Mammary epithelial cell (primary cell): ENCODE measurements at regions of chr16 and their contacts with region 1.

Region 1: DNA sequence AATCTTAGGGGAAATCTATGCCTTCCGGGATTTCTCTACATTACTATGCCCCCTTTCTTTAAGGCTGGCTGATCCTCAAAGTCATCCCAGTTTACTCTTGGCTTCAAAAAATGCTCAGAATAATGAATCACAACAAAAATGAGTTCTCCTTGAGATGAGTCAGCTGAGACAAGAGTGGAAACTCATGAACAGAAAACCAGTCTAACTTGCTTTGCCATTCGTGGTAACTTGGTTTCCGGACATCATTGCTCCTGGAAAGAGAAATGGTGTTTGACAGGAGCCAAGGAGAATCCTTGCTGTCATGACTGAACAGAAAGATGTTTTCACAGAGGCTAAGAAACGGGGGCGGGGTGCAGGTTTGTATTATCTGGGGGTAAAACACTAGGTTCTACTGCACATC is 435.6 kb upstream of the DYNLRB2 start:
- DNase-seq: peak; percentile 96
- H3K4me3 ChIP-seq: no peak overlapping the region
- H3K27ac ChIP-seq: peak overlapping the region; percentile 85
- H3K4me1 ChIP-seq: peaks cover 38% of the 10 kb centered on the region
- H3K27me3 ChIP-seq: no peaks in the 10 kb centered on the region
- CTCF ChIP-seq: no peak

Region 2: GRCh38 chr16:80027007-80027965 is 77.9 kb before region 1 on chr16:
- CTCF ChIA-PET with region 1: no interaction called
- dilution Hi-C with region 1: no loop called
- in situ Hi-C with region 1: no loop called
- intact Hi-C with region 1: loop called (anchors 5 kb)
- DNase-seq: peak; percentile 99
- H3K4me3 ChIP-seq: peak overlapping the region in 2 of 3 experiments; percentile 6 to 16
- H3K27ac ChIP-seq: peak overlapping the region; percentile 96
- H3K4me1 ChIP-seq: peaks cover 46% of the 10 kb centered on the region
- H3K27me3 ChIP-seq: no peaks in the 10 kb centered on the region
- CTCF ChIP-seq: no peak

Region 3: GRCh38 chr16:80158766-80159165 is 53.6 kb after region 1 on chr16:
- CTCF ChIA-PET with region 1: no interaction called
- dilution Hi-C with region 1: no loop called
- in situ Hi-C with region 1: no loop called
- intact Hi-C with region 1: loop called (anchors 5 kb)
- DNase-seq: peak; percentile 95
- H3K4me3 ChIP-seq: no peak overlapping the region
- H3K27ac ChIP-seq: no peak overlapping the region
- H3K4me1 ChIP-seq: peaks cover 14% of the 10 kb centered on the region
- H3K27me3 ChIP-seq: no peaks in the 10 kb centered on the region
- CTCF ChIP-seq: no peak

Region 4: GRCh38 chr16:80174418-80174817 is 69.3 kb after region 1 on chr16:
- CTCF ChIA-PET with region 1: no interaction called
- dilution Hi-C with region 1: no loop called
- in situ Hi-C with region 1: no loop called
- intact Hi-C with region 1: loop called (anchors 1 kb)
- DNase-seq: peak; percentile 70
- H3K4me3 ChIP-seq: no peak overlapping the region
- H3K27ac ChIP-seq: peak overlapping the region; percentile 38
- H3K4me1 ChIP-seq: peaks cover 25% of the 10 kb centered on the region
- H3K27me3 ChIP-seq: no peaks in the 10 kb centered on the region
- CTCF ChIP-seq: no peak

Region 5: GRCh38 chr16:80273635-80274538 is 168.7 kb after region 1 on chr16:
- CTCF ChIA-PET with region 1: no interaction called
- dilution Hi-C with region 1: no loop called
- in situ Hi-C with region 1: no loop called
- intact Hi-C with region 1: loop called (anchors 10 kb)
- DNase-seq: peak; percentile 79
- H3K4me3 ChIP-seq: no peak overlapping the region
- H3K27ac ChIP-seq: peak overlapping the region; percentile 87
- H3K4me1 ChIP-seq: peaks cover 24% of the 10 kb centered on the region
- H3K27me3 ChIP-seq: no peaks in the 10 kb centered on the region
- CTCF ChIP-seq: no peak

Region 6: GRCh38 chr16:80369138-80369958 is 264.2 kb after region 1 on chr16:
- CTCF ChIA-PET with region 1: no interaction called
- dilution Hi-C with region 1: no loop called
- in situ Hi-C with region 1: no loop called
- intact Hi-C with region 1: loop called (anchors 5 kb)
- DNase-seq: peak; percentile 39
- H3K4me3 ChIP-seq: no peak overlapping the region
- H3K27ac ChIP-seq: no peak overlapping the region
- H3K4me1 ChIP-seq: peaks cover 4% of the 10 kb centered on the region
- H3K27me3 ChIP-seq: no peaks in the 10 kb centered on the region
- CTCF ChIP-seq: peak; percentile 70 to 85

Region 7: GRCh38 chr16:80407265-80407987 is 302.3 kb after region 1 on chr16:
- CTCF ChIA-PET with region 1: no interaction called
- dilution Hi-C with region 1: no loop called
- in situ Hi-C with region 1: no loop called
- intact Hi-C with region 1: no loop called
- DNase-seq: no peak
- H3K4me3 ChIP-seq: no peak overlapping the region
- H3K27ac ChIP-seq: no peak overlapping the region
- H3K4me1 ChIP-seq: no peaks in the 10 kb centered on the region
- H3K27me3 ChIP-seq: peaks cover 3% of the 10 kb centered on the region
- CTCF ChIP-seq: no peak